K562 (cell line): ENCODE measurements at regions of chr1 and their contacts with region 1.

Region 1: DNA sequence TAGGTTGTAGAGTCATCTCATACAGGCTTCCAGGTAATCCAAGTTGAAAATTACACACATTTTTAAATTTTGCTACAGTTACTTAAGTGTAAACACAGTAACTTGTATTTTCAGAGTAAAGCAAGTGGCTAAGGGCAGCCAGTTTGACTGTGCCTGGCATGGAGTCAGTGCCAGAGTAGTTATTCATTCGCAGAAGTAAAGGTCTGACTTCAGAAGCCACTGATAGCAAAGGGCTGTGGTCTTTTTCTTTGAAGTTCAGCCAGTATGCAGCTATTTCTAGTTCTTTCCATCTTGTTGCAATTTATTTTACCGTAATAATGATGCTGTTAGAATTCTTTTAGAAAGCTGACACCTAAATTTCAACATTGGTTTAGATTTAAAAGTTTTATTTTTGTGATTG is 9.4 kb downstream of the TMEM50A start:
- DNase-seq: no peak
- ATAC-seq: no peak
- H3K4me3 ChIP-seq: no peak overlapping the region
- H3K27ac ChIP-seq: no peak overlapping the region
- H3K4me1 ChIP-seq: no peaks in the 10 kb centered on the region
- H3K27me3 ChIP-seq: no peaks in the 10 kb centered on the region
- CTCF ChIP-seq: no peak
- EP300 ChIP-seq: no peak
- POLR2A ChIP-seq: no peak
- RAD21 ChIP-seq: no peak

Region 2: GRCh38 chr1:25253911-25254310 is 93.6 kb before region 1 on chr1:
- CTCF ChIA-PET with region 1: no interaction called
- POLR2A ChIA-PET with region 1: no interaction called
- in situ Hi-C with region 1: loop called (anchors 5 kb)
- intact Hi-C with region 1: no loop called
- DNase-seq: no peak
- ATAC-seq: peak; percentile 50; the same call in 1 of the 3 replicates
- H3K4me3 ChIP-seq: no peak overlapping the region
- H3K27ac ChIP-seq: no peak overlapping the region
- H3K4me1 ChIP-seq: peaks cover 7 to 10% of the 10 kb centered on the region in 2 experiments; a peak in 3 of 5 replicates
- H3K27me3 ChIP-seq: no peaks in the 10 kb centered on the region
- CTCF ChIP-seq: no peak
- EP300 ChIP-seq: no peak
- POLR2A ChIP-seq: no peak
- RAD21 ChIP-seq: no peak

Region 3: DNA sequence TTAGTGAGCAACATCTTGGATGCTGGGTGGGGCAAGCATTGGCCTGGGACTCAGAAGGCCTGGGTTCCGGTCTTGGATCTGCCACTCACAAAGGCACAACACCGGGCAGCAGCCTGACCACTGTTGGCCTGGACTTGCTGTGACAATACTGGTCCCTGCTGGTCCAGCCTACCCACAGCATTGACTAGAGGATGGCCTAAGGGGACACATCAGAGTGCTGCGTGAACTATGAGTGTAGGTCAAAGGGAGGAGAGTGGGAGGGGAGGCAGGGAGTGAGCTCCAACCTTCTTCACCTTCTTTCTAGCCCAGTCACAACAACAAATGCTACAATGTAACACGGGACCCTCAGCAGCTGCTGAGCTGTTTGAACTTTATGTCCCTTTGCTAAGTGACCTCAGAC is 21.7 kb after region 1 on chr1:
- CTCF ChIA-PET with region 1: no interaction called
- POLR2A ChIA-PET with region 1: no interaction called
- in situ Hi-C with region 1: no loop called
- intact Hi-C with region 1: no loop called
- DNase-seq: peak; percentile 24 to 60 (median 34)
- ATAC-seq: peak; percentile 82
- H3K4me3 ChIP-seq: no peak overlapping the region
- H3K27ac ChIP-seq: no peak overlapping the region
- H3K4me1 ChIP-seq: peaks cover 14 to 16% of the 10 kb centered on the region in 2 experiments
- H3K27me3 ChIP-seq: no peaks in the 10 kb centered on the region
- CTCF ChIP-seq: peak in 2 of 3 experiments; percentile 21 to 34; a peak in 3 of 6 replicates
- EP300 ChIP-seq: no peak
- POLR2A ChIP-seq: no peak
- RAD21 ChIP-seq: peak in 1 of 2 experiments; percentile 25; a peak in 1 of 4 replicates

Region 4: DNA sequence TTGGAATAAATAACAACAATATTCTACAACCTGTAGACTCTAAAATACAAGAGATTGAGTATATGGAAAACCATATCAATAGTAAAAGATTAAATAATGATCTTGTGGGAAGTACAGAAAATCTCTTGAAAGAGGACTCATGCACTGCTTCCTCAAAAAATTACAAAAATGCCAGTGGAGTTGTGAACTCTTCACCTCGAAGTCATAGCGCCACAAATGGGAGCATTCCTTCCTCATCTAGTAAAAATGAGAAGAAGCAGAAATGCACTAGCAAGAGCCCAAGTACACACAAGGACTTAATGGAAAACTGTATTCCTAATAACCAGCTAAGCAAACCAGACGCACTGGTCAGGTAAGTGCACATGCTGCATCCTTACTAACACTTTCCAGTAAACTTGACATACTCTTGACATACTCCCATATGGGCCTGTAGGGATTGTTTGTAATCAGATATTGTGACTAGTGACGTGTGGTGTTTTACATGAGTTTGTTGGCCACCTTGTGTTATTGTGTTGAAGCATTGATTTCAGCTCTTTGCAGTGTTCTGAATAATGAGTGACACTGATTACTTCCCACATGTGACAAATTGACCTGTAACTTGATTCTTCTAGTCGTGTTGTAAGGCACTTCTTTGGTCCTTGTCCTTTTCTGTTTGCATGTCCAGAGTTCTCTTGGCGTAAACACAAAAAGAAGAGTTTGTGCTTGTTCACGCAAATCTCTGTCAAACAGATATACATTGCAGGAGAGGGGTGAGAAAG is 111.2 kb after region 1 on chr1:
- CTCF ChIA-PET with region 1: no interaction called
- POLR2A ChIA-PET with region 1: no interaction called
- in situ Hi-C with region 1: no loop called
- intact Hi-C with region 1: no loop called
- DNase-seq: no peak
- ATAC-seq: no peak
- H3K4me3 ChIP-seq: no peak overlapping the region
- H3K27ac ChIP-seq: no peak overlapping the region
- H3K4me1 ChIP-seq: peaks cover 0 to 9% of the 10 kb centered on the region in 2 experiments; a peak in 3 of 5 replicates
- H3K27me3 ChIP-seq: no peaks in the 10 kb centered on the region
- CTCF ChIP-seq: no peak
- EP300 ChIP-seq: no peak
- POLR2A ChIP-seq: no peak
- RAD21 ChIP-seq: no peak